ENCODE measurements at regions of chr10 and their contacts with region 1.

Region 1: DNA sequence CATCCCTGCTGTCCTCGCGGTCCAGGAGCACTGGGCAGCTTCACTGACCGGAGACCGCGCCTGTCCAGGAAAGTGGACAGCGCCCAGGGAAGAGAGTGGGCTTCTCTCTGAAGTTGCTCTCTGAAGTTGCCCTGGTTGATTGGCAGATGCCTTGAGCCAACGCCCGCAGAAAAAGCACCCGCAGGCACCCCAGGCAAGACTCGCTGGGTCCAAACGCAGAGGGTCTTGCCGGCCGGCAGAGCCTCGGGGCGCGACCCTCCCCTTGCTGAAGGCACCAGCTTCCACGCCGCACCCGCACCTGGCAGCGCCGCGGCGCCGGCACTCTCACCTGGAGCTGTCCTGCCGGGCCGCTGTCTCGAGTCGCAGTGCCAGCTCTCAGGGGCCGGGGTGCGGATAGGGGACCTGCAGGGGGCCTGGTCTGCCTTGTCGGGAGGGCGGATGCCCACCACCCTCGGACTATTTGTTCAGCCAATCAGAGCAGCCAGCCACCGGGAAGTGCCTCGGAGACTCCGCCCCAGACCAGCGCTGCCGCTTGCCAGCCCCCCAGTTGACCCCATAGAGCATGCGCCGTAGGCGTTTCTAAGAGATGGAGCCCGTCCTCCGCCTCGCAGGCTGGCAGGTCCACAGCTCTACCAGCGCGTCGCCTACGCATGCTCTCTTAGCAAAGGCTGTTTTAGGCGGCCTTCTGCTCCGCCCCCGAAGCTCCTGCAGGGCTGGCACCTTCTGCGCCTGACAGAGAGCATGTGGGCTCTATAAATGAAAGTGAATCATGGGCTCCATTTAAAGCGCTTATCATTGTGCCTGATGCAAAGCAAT is at the start of gene LIPA:
- DNase-seq: peak; percentile 87 to 94
- ATAC-seq: peak; percentile 95 to 97
- H3K4me3 ChIP-seq: peak within 1 kb of the TSS; percentile 78 to 93 (median 84)
- H3K27ac ChIP-seq: peak within 1 kb of the TSS; percentile 73 to 79 (median 77)
- H3K4me1 ChIP-seq: peaks cover 0 to 9% of the 10 kb centered on the region in 2 donors
- H3K27me3 ChIP-seq: no peaks in the 10 kb centered on the region
- CTCF ChIP-seq: no peak
- POLR2A ChIP-seq: peak; percentile 38 to 43
- total RNA-seq, gene LIPA: 7.7 to 11.4 (median 9.3) TPM

Region 2: DNA sequence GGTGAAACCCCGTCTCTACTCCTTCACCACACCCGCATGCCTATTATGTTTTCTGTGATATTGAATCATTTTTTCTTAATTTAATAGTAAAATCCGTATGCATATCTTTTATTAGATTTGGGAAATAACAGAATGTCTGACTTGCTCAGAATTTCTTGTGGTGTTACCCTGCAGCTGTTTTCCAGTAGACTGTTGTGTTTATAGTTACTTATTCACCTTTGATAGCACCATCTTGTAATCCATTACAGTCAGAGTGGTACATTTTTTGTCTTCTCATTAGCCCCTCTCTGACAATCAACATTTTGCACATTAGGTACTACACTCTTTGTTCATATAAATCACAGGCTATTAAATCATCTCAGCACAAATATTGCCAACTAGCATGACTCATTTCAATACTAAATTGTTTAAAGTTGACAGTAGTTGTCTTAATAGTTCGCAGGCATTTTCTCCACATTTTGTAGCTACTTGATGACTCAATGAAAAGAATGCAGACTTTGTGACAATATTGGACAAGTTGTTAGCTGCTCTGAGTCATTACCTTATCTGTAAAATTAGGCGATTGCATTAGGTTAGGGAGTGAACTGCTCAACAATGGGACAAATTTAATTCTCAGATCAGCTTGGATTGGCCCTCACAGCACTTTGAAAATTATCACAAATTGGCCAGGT is 301.6 kb after region 1 on chr10:
- in situ Hi-C with region 1: loop called in 1 of 4 experiments (anchors 10 kb)
- intact Hi-C with region 1: no loop called
- DNase-seq: no peak
- ATAC-seq: peak in 1 of 2 donors; percentile 60
- H3K4me3 ChIP-seq: no peak overlapping the region
- H3K27ac ChIP-seq: no peak overlapping the region
- H3K4me1 ChIP-seq: no peaks in the 10 kb centered on the region
- H3K27me3 ChIP-seq: no peaks in the 10 kb centered on the region
- CTCF ChIP-seq: no peak
- POLR2A ChIP-seq: no peak

Measured in gastrocnemius medialis (tissue), 4 donors.